OCI-LY7 (cell line): ENCODE measurements at regions of chr2 and their contacts with region 1.

Region 1: GRCh38 chr2:9423100-9423921 is at the starts of genes CPSF3 and ITGB1BP1:
- DNase-seq: peak; percentile 99
- H3K4me3 ChIP-seq: peak within 1 kb of the TSS; percentile 76
- H3K27ac ChIP-seq: peak within 1 kb of the TSS; percentile 74
- H3K4me1 ChIP-seq: peaks cover 25% of the 10 kb centered on the region
- CTCF ChIP-seq: no peak
- total RNA-seq, gene CPSF3: 52.0 and 54.5 TPM in 2 replicates
- total RNA-seq, gene ITGB1BP1: 51.9 and 54.0 TPM in 2 replicates

Region 2: GRCh38 chr2:9373077-9373875 is 50.0 kb before region 1 on chr2:
- CTCF ChIA-PET with region 1: no interaction called
- POLR2A ChIA-PET with region 1: interaction called, 4 read pairs
- intact Hi-C with region 1: loop called (anchors 2 kb)
- DNase-seq: peak; percentile 90
- H3K4me3 ChIP-seq: no peak overlapping the region
- H3K27ac ChIP-seq: peak overlapping the region; percentile 34
- H3K4me1 ChIP-seq: peaks cover 46% of the 10 kb centered on the region
- CTCF ChIP-seq: no peak

Region 3: DNA sequence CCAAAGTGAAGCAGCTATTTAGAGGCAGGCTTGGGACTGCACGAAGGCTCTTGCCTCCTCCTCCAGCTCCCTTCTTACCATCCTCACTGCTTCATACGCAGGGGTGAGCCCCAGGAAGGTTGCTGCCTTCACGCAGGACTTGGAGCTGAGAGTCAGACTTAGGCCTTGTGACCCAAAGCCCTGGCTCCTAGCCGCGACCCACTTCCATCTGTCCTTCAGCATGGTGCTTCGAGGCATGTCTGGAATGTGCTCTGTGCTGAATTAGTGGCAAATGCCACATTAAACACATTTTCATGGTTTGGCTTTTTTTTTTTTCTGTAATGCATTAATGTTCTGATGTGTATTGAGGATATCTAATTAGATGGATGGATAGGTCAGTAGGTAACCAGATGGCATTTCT is 37.5 kb before region 1 on chr2:
- CTCF ChIA-PET with region 1: no interaction called
- POLR2A ChIA-PET with region 1: no interaction called
- intact Hi-C with region 1: no loop called
- DNase-seq: no peak
- H3K4me3 ChIP-seq: no peak overlapping the region
- H3K27ac ChIP-seq: no peak overlapping the region
- H3K4me1 ChIP-seq: no peaks in the 10 kb centered on the region
- CTCF ChIP-seq: no peak

Region 4: DNA sequence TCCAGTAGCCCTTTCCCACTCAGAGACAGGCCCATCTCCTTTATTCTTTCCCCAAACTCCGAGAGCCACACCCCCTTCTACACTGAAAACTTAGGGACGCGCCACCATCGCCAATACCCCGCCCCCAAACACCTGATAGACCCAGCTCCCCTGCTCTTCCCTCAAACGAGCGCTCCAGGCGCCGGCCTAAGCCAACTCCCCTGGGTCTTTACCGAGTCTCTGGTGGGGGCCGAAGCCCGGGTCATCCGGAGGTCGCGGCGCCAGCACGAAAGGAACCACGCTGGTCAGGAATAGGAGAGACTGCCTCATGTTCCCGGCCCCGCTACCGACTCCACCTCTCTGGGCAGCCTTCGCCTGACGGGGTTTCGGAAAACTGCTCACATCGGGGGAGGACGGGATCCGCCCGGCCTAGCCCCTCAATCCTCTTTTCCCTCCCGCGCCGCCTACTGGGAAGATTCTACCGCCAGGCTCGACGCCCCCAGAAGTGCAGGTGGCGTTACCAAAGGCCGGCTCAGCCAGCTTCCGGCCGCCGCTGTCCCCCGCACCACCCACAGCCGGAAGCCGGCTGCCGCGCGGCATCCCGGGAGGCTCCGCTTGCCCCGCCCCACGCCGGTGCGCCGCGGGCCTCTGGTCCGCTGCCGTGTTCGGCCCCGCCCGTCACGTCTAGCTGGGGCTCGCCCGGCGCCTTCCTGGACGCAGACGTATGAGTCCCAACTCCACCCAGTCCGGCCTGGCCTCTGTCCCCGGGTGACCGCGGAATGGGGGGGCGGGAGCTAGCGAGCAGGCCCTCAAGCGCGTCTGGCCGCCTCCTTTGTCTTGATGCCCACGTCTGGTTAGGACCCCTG is 132.2 kb after region 1 on chr2 and contains the start of gene ADAM17:
- CTCF ChIA-PET with region 1: interaction called, 4 read pairs
- POLR2A ChIA-PET with region 1: interaction called, 4 read pairs
- intact Hi-C with region 1: loop called (anchors 1 kb)
- DNase-seq: peak; percentile 94
- H3K4me3 ChIP-seq: peak within 1 kb of the TSS; percentile 89
- H3K27ac ChIP-seq: peak within 1 kb of the TSS; percentile 97
- H3K4me1 ChIP-seq: peaks cover 30% of the 10 kb centered on the region
- CTCF ChIP-seq: peak; percentile 70
- total RNA-seq, gene ADAM17: 46.9 and 50.5 TPM in 2 replicates

Region 5: DNA sequence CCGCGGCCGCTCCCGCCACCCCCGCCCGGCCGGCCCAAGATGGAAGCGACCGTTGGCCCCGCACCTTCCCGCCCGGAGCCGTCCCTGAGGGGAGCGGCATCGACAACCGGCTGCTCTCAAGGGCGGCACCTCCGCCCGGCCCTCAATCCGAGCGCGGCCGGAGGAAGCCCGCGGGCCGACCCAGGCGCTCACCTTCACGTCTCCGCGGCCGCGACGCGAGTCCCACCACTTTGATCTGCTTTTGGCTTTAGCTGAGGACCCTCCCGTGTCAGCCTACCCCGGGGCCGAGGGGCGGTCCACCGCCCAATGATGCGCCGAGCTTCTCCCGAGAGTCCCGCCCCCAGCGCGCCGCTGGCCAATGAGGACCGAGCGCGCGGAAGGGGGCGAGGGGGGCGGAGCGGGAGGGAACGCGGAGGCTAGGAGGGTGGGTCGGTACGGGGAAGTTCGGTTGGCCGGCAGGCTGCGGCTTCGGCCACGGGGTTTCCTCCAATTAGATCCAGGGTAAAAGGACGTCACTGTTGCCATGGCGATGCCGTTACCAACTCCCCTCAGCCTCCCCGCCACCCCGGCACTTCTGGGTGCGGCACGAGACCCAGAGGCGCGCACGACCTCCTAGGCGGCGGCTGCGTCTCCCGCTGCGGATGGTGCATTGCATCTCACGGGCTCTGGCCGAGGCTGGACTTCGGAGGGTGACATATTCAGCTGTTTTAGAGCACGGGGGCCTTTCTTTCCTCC is 207.6 kb after region 1 on chr2 and contains the start of gene YWHAQ:
- CTCF ChIA-PET with region 1: no interaction called
- POLR2A ChIA-PET with region 1: interaction called, 5 read pairs
- intact Hi-C with region 1: loop called (anchors 1 kb)
- DNase-seq: peak; percentile 99
- H3K4me3 ChIP-seq: peak within 1 kb of the TSS; percentile 89
- H3K27ac ChIP-seq: peak within 1 kb of the TSS; percentile 75
- H3K4me1 ChIP-seq: peaks cover 32% of the 10 kb centered on the region
- CTCF ChIP-seq: no peak
- total RNA-seq, gene YWHAQ: 152 and 181 TPM in 2 replicates

Region 6: GRCh38 chr2:9843229-9844035 is 420.1 kb after region 1 on chr2 and contains the start of gene TAF1B:
- CTCF ChIA-PET with region 1: no interaction called
- POLR2A ChIA-PET with region 1: interaction called, 3 read pairs
- intact Hi-C with region 1: loop called (anchors 5 kb)
- DNase-seq: peak; percentile 93
- H3K4me3 ChIP-seq: peak within 1 kb of the TSS; percentile 82
- H3K27ac ChIP-seq: peak within 1 kb of the TSS; percentile 62
- H3K4me1 ChIP-seq: peaks cover 32% of the 10 kb centered on the region
- CTCF ChIP-seq: peak; percentile 53
- total RNA-seq, gene TAF1B: 25.1 and 31.1 TPM in 2 replicates